HEK293T (cell line): ENCODE measurements at regions of chr3 and their contacts with region 1.

Region 1: DNA sequence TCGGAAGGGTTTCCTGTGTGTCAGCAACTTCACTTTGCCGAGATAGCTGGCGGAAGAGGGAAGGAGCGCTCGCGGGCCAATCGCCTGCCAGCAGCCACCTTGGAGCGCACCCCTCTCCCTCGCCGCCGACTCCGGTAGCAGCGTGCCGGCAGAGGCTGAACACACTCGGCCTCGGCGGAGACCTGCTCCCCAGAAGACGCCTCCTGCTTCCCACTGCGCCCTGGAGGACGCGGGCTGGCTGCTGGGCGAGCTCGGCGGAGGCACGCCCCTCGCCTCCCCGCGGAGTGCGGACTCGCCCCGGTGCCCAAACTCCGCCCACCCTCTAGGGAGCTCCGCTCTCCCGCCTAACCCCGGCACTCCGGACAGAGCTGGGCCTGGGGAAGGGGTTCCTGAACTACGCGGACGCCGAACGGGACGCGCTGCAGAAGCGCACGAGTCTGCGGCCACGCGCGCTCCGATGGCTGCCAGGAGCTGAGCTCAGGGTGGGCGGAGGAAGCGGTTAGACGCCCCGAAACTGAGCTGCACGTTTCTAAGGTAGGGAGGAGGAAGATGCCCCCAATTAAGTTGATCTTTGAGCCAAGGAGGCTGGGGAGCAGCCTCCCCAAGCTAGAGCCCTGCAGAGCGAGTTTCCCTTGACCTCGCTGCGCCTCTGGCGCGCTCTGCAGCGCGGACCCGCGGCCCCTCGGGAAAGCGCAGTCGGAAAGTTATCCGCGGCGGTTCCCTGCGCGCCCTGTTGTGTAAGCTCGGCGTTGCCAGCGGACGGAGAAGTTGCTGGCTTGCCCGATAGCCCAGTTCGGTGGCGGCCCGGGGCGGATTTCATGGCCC is at the start of gene P2RY1:
- DNase-seq: peak; percentile 78

Region 2: GRCh38 chr3:152823173-152823572 is 11.8 kb before region 1 on chr3:
- CTCF ChIA-PET with region 1: no interaction called
- POLR2A ChIA-PET with region 1: interaction called, 11 read pairs
- DNase-seq: no peak

Region 3: GRCh38 chr3:152969561-152970240 is 134.7 kb after region 1 on chr3:
- CTCF ChIA-PET with region 1: no interaction called
- POLR2A ChIA-PET with region 1: no interaction called
- DNase-seq: no peak

Region 4: DNA sequence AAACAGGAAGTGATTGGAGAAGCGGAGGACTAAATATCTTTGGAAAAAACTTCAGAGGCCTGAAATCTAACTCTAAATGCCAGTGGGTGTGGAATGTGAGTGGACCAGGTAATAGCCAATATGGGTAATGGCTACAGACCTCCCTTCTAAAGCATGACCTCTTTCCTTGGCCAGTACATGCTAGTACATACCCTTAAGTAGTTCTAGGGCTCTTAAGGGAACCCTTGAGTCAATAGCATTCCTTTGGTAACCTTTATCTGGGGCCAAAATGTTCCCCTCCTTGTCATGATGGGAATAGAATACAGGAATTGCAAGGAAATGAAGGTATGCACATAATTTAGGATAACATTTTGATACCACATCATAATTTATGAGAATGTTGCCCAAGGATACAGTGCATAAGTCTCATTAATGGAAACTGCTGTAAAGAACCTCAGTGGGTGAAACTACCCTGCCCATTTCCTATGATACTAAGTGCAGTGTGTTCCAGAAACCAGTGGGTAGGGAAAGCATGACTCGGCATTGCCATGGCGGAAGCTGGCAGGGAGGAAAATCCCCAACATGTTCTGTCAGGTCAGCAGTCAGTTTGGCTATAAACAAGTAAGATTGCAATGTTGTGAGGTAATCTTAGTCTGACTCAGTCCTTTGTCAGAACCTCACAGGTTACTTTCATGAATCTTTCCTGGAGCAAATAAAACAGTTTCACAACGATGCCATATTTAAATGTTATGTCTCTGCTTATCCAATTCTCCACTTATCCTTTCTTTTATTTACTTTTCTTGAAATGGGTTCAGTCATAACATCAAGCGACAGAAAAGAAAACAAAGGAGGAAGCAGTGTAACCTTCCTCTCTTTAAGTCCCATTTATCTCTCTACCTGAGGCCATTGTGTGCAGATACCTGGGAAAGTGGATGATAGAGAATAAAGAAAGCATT is 303.6 kb after region 1 on chr3:
- CTCF ChIA-PET with region 1: no interaction called
- POLR2A ChIA-PET with region 1: no interaction called
- DNase-seq: no peak